ENCODE measurements at regions of chr6 and their contacts with region 1.

Region 1: GRCh38 chr6:110873981-110874879 is at the start of gene AMD1:
- DNase-seq: peak; percentile 97
- H3K4me3 Mint-ChIP-seq: peak within 1 kb of the TSS; percentile 85
- H3K27ac Mint-ChIP-seq: peak within 1 kb of the TSS; percentile 98
- H3K4me1 Mint-ChIP-seq: peaks cover 20% of the 10 kb centered on the region
- H3K27me3 Mint-ChIP-seq: no peaks in the 10 kb centered on the region
- CTCF ChIP-seq: no peak
- total RNA-seq, gene AMD1: 74.0 and 74.6 TPM in 2 replicates

Region 2: DNA sequence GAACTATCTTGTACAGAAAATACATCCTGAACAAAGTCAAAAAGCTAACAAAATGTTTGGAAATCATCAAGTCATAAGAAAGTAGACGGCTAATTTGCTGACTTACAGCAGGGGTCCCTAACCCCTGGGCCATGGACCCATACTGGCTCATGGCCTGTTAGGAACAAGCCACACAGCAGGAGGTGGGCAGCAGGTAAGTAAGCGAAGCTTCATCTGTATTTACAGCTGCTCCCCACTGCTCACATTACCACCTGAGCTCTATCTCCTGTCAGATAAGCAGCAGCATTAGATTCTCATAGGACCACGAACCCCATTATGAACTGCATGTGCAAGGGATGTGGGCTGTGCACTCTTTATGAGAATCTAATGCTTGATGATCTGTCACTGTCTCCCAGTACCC is 174.4 kb before region 1 on chr6:
- CTCF ChIA-PET with region 1: interaction called, 4 read pairs
- intact Hi-C with region 1: loop called (anchors 1 kb)
- DNase-seq: no peak
- H3K4me3 Mint-ChIP-seq: no peak overlapping the region
- H3K27ac Mint-ChIP-seq: no peak overlapping the region
- H3K4me1 Mint-ChIP-seq: peaks cover 9% of the 10 kb centered on the region
- H3K27me3 Mint-ChIP-seq: no peaks in the 10 kb centered on the region
- CTCF ChIP-seq: no peak

Region 3: GRCh38 chr6:110746680-110747079 is 127.5 kb before region 1 on chr6:
- CTCF ChIA-PET with region 1: no interaction called
- intact Hi-C with region 1: loop called (anchors 5 kb)
- DNase-seq: peak; percentile 6
- H3K4me3 Mint-ChIP-seq: peak overlapping the region; percentile 19
- H3K27ac Mint-ChIP-seq: peak overlapping the region; percentile 4
- H3K4me1 Mint-ChIP-seq: peaks cover 36% of the 10 kb centered on the region
- H3K27me3 Mint-ChIP-seq: no peaks in the 10 kb centered on the region
- CTCF ChIP-seq: no peak

Region 4: DNA sequence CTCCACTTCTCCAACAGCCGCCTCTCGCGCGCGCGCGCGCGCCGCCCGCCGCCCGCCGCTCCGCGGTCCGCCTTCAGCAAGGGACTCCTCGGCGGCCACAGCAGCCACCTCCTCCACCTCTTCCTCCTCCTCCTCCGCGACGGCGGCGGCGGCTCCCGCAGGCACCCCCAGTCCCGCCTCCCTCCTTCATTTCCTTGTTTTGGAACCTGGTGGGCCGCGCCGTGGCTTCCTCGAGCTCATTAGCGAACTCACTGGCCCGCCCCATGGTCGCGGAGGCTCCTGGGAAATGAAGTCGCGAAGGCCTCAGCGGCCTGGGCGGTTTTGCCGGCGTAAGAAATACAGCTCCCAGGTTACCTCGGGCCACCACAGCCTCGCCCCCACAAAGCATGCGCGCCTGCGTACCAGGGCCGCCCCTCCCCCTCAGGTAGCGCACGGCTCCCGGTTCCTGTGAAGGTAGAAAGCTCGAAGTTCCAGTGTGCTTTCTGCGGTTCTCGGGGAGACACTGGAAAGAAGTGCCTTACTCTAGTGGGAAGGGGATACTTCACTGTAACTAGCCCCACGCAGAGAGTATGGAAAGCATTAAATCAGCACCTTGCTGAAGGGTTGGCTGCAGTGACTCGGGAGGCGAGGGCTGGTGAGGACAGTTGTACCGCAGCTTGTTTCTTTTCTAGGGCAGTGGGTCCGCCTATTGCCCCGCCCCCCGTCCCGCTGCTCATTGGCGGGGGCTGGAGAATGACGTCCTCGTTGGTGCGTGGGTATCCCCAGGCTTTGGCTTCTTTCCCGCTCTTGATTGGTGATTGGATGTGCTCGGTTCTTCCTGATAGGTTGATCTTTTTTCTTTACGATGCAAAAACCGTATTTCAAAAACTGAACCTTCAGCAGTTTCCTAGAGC is 58.8 kb before region 1 on chr6 and contains the start of gene CDK19:
- CTCF ChIA-PET with region 1: interaction called, 11 read pairs
- intact Hi-C with region 1: loop called (anchors 2 kb)
- DNase-seq: peak; percentile 98
- H3K4me3 Mint-ChIP-seq: peak within 1 kb of the TSS; percentile 91
- H3K27ac Mint-ChIP-seq: peak within 1 kb of the TSS; percentile 91
- H3K4me1 Mint-ChIP-seq: peaks cover 17% of the 10 kb centered on the region
- H3K27me3 Mint-ChIP-seq: no peaks in the 10 kb centered on the region
- CTCF ChIP-seq: no peak
- total RNA-seq, gene CDK19: 17.7 and 24.3 TPM in 2 replicates

Region 5: GRCh38 chr6:111087106-111087835 is 213.0 kb after region 1 on chr6 and contains the start of gene SLC16A10:
- CTCF ChIA-PET with region 1: no interaction called
- intact Hi-C with region 1: no loop called
- DNase-seq: peak; percentile 73
- H3K4me3 Mint-ChIP-seq: peak within 1 kb of the TSS; percentile 85
- H3K27ac Mint-ChIP-seq: no peak within 1 kb of the TSS
- H3K4me1 Mint-ChIP-seq: peaks cover 13% of the 10 kb centered on the region
- H3K27me3 Mint-ChIP-seq: no peaks in the 10 kb centered on the region
- CTCF ChIP-seq: no peak
- total RNA-seq, gene SLC16A10: 2.6 TPM in 2 replicates